MCF 10A (cell line): ENCODE measurements at regions of chr10 and their contacts with region 1.

Region 1: GRCh38 chr10:122648599-122649428 is 50.8 kb downstream of the C10orf120 start:
- DNase-seq: peak; percentile 68
- H3K4me3 Mint-ChIP-seq: no peak overlapping the region
- H3K27ac Mint-ChIP-seq: no peak overlapping the region
- H3K4me1 Mint-ChIP-seq: no peaks in the 10 kb centered on the region
- H3K27me3 Mint-ChIP-seq: peaks cover 28% of the 10 kb centered on the region
- CTCF ChIP-seq: peak; percentile 70

Region 2: GRCh38 chr10:122689146-122689820 is 40.5 kb after region 1 on chr10:
- CTCF ChIA-PET with region 1: interaction called, 12 read pairs
- POLR2A ChIA-PET with region 1: no interaction called
- intact Hi-C with region 1: no loop called
- DNase-seq: no peak
- H3K4me3 Mint-ChIP-seq: no peak overlapping the region
- H3K27ac Mint-ChIP-seq: no peak overlapping the region
- H3K4me1 Mint-ChIP-seq: no peaks in the 10 kb centered on the region
- H3K27me3 Mint-ChIP-seq: peaks cover 60% of the 10 kb centered on the region
- CTCF ChIP-seq: no peak

Region 3: GRCh38 chr10:122696687-122697086 is 47.9 kb after region 1 on chr10:
- CTCF ChIA-PET with region 1: interaction called, 10 read pairs
- POLR2A ChIA-PET with region 1: no interaction called
- intact Hi-C with region 1: no loop called
- DNase-seq: no peak
- H3K4me3 Mint-ChIP-seq: no peak overlapping the region
- H3K27ac Mint-ChIP-seq: no peak overlapping the region
- H3K4me1 Mint-ChIP-seq: no peaks in the 10 kb centered on the region
- H3K27me3 Mint-ChIP-seq: peaks cover 28% of the 10 kb centered on the region
- CTCF ChIP-seq: no peak